Natural killer cell (primary cell): ENCODE measurements at regions of chr9 and their contacts with region 1.

Region 1: GRCh38 chr9:131323629-131324028 is 34.1 kb downstream of the PLPP7 start:
- DNase-seq: no peak
- ATAC-seq: no peak
- H3K4me3 ChIP-seq: no peak overlapping the region
- H3K4me3 Mint-ChIP-seq: no peak overlapping the region
- H3K27ac ChIP-seq: no peak overlapping the region
- H3K27ac Mint-ChIP-seq: no peak overlapping the region
- H3K4me1 ChIP-seq: no peaks in the 10 kb centered on the region
- H3K4me1 Mint-ChIP-seq: no peaks in the 10 kb centered on the region
- H3K27me3 ChIP-seq: no peaks in the 10 kb centered on the region
- H3K27me3 Mint-ChIP-seq: no peaks in the 10 kb centered on the region
- CTCF ChIP-seq: no peak

Region 2: GRCh38 chr9:130901498-130902203 is 422.0 kb before region 1 on chr9:
- intact Hi-C with region 1: no loop called
- DNase-seq: no peak
- ATAC-seq: no peak
- H3K4me3 ChIP-seq: no peak overlapping the region
- H3K4me3 Mint-ChIP-seq: no peak overlapping the region
- H3K27ac ChIP-seq: no peak overlapping the region
- H3K27ac Mint-ChIP-seq: no peak overlapping the region
- H3K4me1 ChIP-seq: no peaks in the 10 kb centered on the region
- H3K4me1 Mint-ChIP-seq: no peaks in the 10 kb centered on the region
- H3K27me3 ChIP-seq: no peaks in the 10 kb centered on the region
- H3K27me3 Mint-ChIP-seq: no peaks in the 10 kb centered on the region
- CTCF ChIP-seq: no peak

Region 3: GRCh38 chr9:131270171-131271015 is 53.2 kb before region 1 on chr9:
- intact Hi-C with region 1: no loop called
- DNase-seq: peak in 1 of 2 donors; percentile 76
- ATAC-seq: peak; percentile 2 to 37 (median 8)
- H3K4me3 ChIP-seq: peak overlapping the region; percentile 19
- H3K4me3 Mint-ChIP-seq: peak overlapping the region; percentile 99
- H3K27ac ChIP-seq: peak overlapping the region; percentile 87
- H3K27ac Mint-ChIP-seq: peak overlapping the region; percentile 91 to 95
- H3K4me1 ChIP-seq: peaks cover 92% of the 10 kb centered on the region
- H3K4me1 Mint-ChIP-seq: peaks cover 70 to 79% of the 10 kb centered on the region in 2 donors
- H3K27me3 ChIP-seq: no peaks in the 10 kb centered on the region
- H3K27me3 Mint-ChIP-seq: no peaks in the 10 kb centered on the region
- CTCF ChIP-seq: no peak

Region 4: DNA sequence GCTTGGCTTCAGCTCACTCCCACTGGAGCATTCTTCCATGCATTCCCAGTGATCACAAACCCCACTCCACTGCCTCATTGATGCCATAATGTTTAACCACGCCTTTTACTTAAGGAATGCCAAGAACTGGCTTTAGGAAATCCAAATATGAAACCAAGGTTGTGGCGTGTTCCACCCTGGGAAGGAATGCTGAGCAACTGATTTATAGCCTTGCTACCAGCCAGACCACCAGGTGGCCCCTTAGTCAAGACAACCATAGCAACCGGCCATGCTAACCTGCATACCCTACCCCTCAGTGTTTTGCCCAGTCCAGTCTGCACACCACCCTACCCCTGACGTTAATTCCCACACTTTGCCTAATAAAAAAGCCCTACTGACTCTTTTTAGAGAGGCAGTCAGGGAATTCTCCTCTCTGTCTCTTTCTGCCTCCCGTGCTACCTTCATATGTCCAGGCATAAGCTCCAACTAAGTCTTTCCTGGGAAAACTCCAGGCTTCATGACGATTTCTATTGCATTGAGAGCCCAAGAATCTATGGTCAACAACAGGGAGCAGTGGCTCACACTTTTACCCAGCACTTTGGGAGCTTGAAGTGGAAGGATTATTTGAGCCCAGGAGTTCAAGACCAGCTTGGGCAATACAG is 43.3 kb after region 1 on chr9:
- intact Hi-C with region 1: loop called (anchors 2 kb)
- DNase-seq: peak in 1 of 2 donors; percentile 46
- ATAC-seq: peak in 1 of 3 donors; percentile 36
- H3K4me3 ChIP-seq: no peak overlapping the region
- H3K4me3 Mint-ChIP-seq: no peak overlapping the region
- H3K27ac ChIP-seq: no peak overlapping the region
- H3K27ac Mint-ChIP-seq: no peak overlapping the region
- H3K4me1 ChIP-seq: no peaks in the 10 kb centered on the region
- H3K4me1 Mint-ChIP-seq: peaks cover 0 to 6% of the 10 kb centered on the region in 2 donors
- H3K27me3 ChIP-seq: no peaks in the 10 kb centered on the region
- H3K27me3 Mint-ChIP-seq: no peaks in the 10 kb centered on the region
- CTCF ChIP-seq: no peak